ENCODE measurements at regions of chr1 and their contacts with region 1.

Region 1: GRCh38 chr1:25616095-25616986 is at the start of gene MAN1C1:
- DNase-seq: peak; percentile 84 to 90 (median 87)
- H3K4me3 ChIP-seq: peak within 1 kb of the TSS; percentile 61 to 90 (median 77)
- H3K4me3 Mint-ChIP-seq: peak within 1 kb of the TSS; percentile 82 to 89
- H3K27ac ChIP-seq: peak within 1 kb of the TSS in 1 of 2 donors; percentile 17
- H3K27ac Mint-ChIP-seq: peak within 1 kb of the TSS in 1 of 7 donors; percentile 67
- H3K4me1 ChIP-seq: peaks cover 33 to 48% of the 10 kb centered on the region in 2 donors
- H3K4me1 Mint-ChIP-seq: peaks cover 43% of the 10 kb centered on the region
- H3K27me3 ChIP-seq: peaks cover 7 to 13% of the 10 kb centered on the region in 2 donors
- H3K27me3 Mint-ChIP-seq: peaks cover 15 to 39% (median 21%) of the 10 kb centered on the region in 3 donors
- CTCF ChIP-seq: peak; percentile 33
- polyA plus RNA-seq, gene MAN1C1: 1.2 to 7.2 (median 1.7) TPM

Region 2: GRCh38 chr1:25543425-25544242 is 72.7 kb before region 1 on chr1 and contains the start of gene LDLRAP1:
- intact Hi-C with region 1: loop called in 1 of 2 experiments (anchors 10 kb)
- DNase-seq: peak; percentile 63 to 68 (median 65)
- H3K4me3 ChIP-seq: peak within 1 kb of the TSS; percentile 59 to 82 (median 60)
- H3K4me3 Mint-ChIP-seq: peak within 1 kb of the TSS; percentile 73 to 87
- H3K27ac ChIP-seq: peak within 1 kb of the TSS in 1 of 2 donors; percentile 51
- H3K27ac Mint-ChIP-seq: peak within 1 kb of the TSS in 3 of 7 donors; percentile 23 to 49 (median 30)
- H3K4me1 ChIP-seq: peaks cover 25 to 36% of the 10 kb centered on the region in 2 donors
- H3K4me1 Mint-ChIP-seq: peaks cover 41% of the 10 kb centered on the region
- H3K27me3 ChIP-seq: no peaks in the 10 kb centered on the region
- H3K27me3 Mint-ChIP-seq: peaks cover 3 to 12% (median 5%) of the 10 kb centered on the region in 3 donors
- CTCF ChIP-seq: no peak
- polyA plus RNA-seq, gene LDLRAP1: 12.8 to 18.5 (median 14.6) TPM

Region 3: GRCh38 chr1:25727635-25728330 is 111.4 kb after region 1 on chr1:
- intact Hi-C with region 1: no loop called
- DNase-seq: no peak
- H3K4me3 ChIP-seq: no peak overlapping the region
- H3K4me3 Mint-ChIP-seq: no peak overlapping the region
- H3K27ac ChIP-seq: no peak overlapping the region
- H3K27ac Mint-ChIP-seq: peak overlapping the region in 1 of 7 donors; percentile 77
- H3K4me1 ChIP-seq: no peaks in the 10 kb centered on the region
- H3K4me1 Mint-ChIP-seq: peaks cover 6% of the 10 kb centered on the region
- H3K27me3 ChIP-seq: no peaks in the 10 kb centered on the region
- H3K27me3 Mint-ChIP-seq: peaks cover 2 to 11% (median 2%) of the 10 kb centered on the region in 3 donors
- CTCF ChIP-seq: no peak

Region 4: DNA sequence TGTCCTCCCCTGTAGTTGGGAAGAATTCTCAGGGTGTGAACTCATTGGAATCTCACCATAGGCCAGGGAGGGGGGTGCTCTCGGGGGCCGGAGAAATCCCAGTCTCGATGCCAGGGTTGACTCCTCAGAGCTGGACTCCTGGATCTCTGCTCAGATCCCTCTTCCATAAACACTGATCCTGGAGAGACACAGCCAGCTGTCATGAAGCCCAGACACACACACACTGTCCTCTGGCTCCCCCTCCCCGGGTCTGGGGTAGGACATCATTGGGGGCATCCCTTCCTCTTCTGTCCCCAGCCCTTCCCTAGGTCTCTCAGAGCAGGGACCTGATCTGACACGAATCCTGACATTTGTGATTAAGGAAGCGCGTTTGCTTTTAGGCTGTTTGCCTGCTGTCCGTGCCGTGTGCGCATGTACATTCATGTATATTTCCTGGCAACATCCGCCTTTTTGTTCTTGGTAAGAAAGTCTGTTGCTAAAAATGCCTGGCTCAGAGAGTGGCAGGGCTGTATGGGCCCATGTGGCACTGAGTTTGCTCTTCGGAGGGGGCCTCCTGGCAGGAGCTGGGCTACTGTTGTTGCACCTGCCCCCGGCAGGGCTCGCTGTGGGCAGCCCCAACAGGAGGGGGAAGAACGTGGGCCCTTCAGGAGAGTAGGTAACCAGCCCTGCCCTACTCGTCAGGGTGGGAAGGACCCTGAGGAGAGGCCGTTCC is 138.3 kb after region 1 on chr1:
- intact Hi-C with region 1: no loop called
- DNase-seq: no peak
- H3K4me3 ChIP-seq: no peak overlapping the region
- H3K4me3 Mint-ChIP-seq: no peak overlapping the region
- H3K27ac ChIP-seq: no peak overlapping the region
- H3K27ac Mint-ChIP-seq: no peak overlapping the region
- H3K4me1 ChIP-seq: peaks cover 0 to 5% of the 10 kb centered on the region in 2 donors
- H3K4me1 Mint-ChIP-seq: peaks cover 20% of the 10 kb centered on the region
- H3K27me3 ChIP-seq: no peaks in the 10 kb centered on the region
- H3K27me3 Mint-ChIP-seq: peaks cover 0 to 3% (median 0%) of the 10 kb centered on the region in 3 donors
- CTCF ChIP-seq: no peak

Region 5: GRCh38 chr1:25799935-25800702 is 183.8 kb after region 1 on chr1 and contains the start of gene SELENON:
- intact Hi-C with region 1: loop called (anchors 10 kb)
- DNase-seq: peak in 1 of 3 donors; percentile 16
- H3K4me3 ChIP-seq: peak within 1 kb of the TSS; percentile 48 to 78 (median 61)
- H3K4me3 Mint-ChIP-seq: peak within 1 kb of the TSS; percentile 90 to 93
- H3K27ac ChIP-seq: peak within 1 kb of the TSS in 1 of 2 donors; percentile 33
- H3K27ac Mint-ChIP-seq: peak within 1 kb of the TSS in 4 of 7 donors; percentile 42 to 86 (median 79)
- H3K4me1 ChIP-seq: peaks cover 13 to 16% of the 10 kb centered on the region in 2 donors
- H3K4me1 Mint-ChIP-seq: peaks cover 43% of the 10 kb centered on the region
- H3K27me3 ChIP-seq: no peaks in the 10 kb centered on the region
- H3K27me3 Mint-ChIP-seq: peaks cover 1 to 2% (median 2%) of the 10 kb centered on the region in 3 donors
- CTCF ChIP-seq: no peak
- polyA plus RNA-seq, gene SELENON: 1.5 to 31.5 (median 3.5) TPM